IMR-90 (cell line): ENCODE measurements at regions of chr12 and their contacts with region 1.

Region 1: GRCh38 chr12:78002878-78003277 is 172.2 kb downstream of the NAV3 start:
- DNase-seq: peak; percentile 15
- ATAC-seq: no peak
- H3K4me3 ChIP-seq: no peak overlapping the region
- H3K27ac ChIP-seq: no peak overlapping the region
- H3K4me1 ChIP-seq: no peaks in the 10 kb centered on the region
- H3K27me3 ChIP-seq: no peaks in the 10 kb centered on the region
- CTCF ChIP-seq: no peak
- POLR2A ChIP-seq: no peak
- RAD21 ChIP-seq: no peak

Region 2: GRCh38 chr12:78096909-78097597 is 94.2 kb after region 1 on chr12:
- CTCF ChIA-PET with region 1: no interaction called
- POLR2A ChIA-PET with region 1: no interaction called
- dilution Hi-C with region 1: no loop called
- in situ Hi-C with region 1: no loop called
- intact Hi-C with region 1: loop called (anchors 5 kb)
- DNase-seq: peak; percentile 69
- ATAC-seq: peak; percentile 76
- H3K4me3 ChIP-seq: no peak overlapping the region
- H3K27ac ChIP-seq: no peak overlapping the region
- H3K4me1 ChIP-seq: peaks cover 4% of the 10 kb centered on the region
- H3K27me3 ChIP-seq: no peaks in the 10 kb centered on the region
- CTCF ChIP-seq: no peak; the same call in 1 of the 2 replicates
- POLR2A ChIP-seq: no peak
- RAD21 ChIP-seq: peak; percentile 31; the same call in 1 of the 2 replicates

Region 3: GRCh38 chr12:78120866-78121560 is 118.1 kb after region 1 on chr12:
- CTCF ChIA-PET with region 1: no interaction called
- POLR2A ChIA-PET with region 1: interaction called, 7 read pairs
- dilution Hi-C with region 1: no loop called
- in situ Hi-C with region 1: loop called (anchors 10 kb)
- intact Hi-C with region 1: loop called (anchors 1 kb)
- DNase-seq: peak; percentile 52
- ATAC-seq: no peak
- H3K4me3 ChIP-seq: no peak overlapping the region
- H3K27ac ChIP-seq: no peak overlapping the region
- H3K4me1 ChIP-seq: no peaks in the 10 kb centered on the region; the same call in 1 of the 2 replicates
- H3K27me3 ChIP-seq: no peaks in the 10 kb centered on the region
- CTCF ChIP-seq: peak; percentile 46
- POLR2A ChIP-seq: no peak
- RAD21 ChIP-seq: peak; percentile 51

Region 4: GRCh38 chr12:78584695-78585531 is 582.0 kb after region 1 on chr12:
- CTCF ChIA-PET with region 1: no interaction called
- POLR2A ChIA-PET with region 1: no interaction called
- dilution Hi-C with region 1: no loop called
- in situ Hi-C with region 1: no loop called
- intact Hi-C with region 1: loop called (anchors 5 kb)
- DNase-seq: peak; percentile 6
- ATAC-seq: no peak
- H3K4me3 ChIP-seq: no peak overlapping the region
- H3K27ac ChIP-seq: no peak overlapping the region
- H3K4me1 ChIP-seq: no peaks in the 10 kb centered on the region
- H3K27me3 ChIP-seq: no peaks in the 10 kb centered on the region
- CTCF ChIP-seq: peak; percentile 13; the same call in 1 of the 2 replicates
- POLR2A ChIP-seq: no peak
- RAD21 ChIP-seq: peak; percentile 41; the same call in 1 of the 2 replicates